HepG2 (cell line): ENCODE measurements at regions of chr3 and their contacts with region 1.

Region 1: GRCh38 chr3:33787328-33788009 is 11.0 kb upstream of the PDCD6IP start:
- DNase-seq: peak; percentile 65
- ATAC-seq: peak; percentile 95
- H3K4me3 ChIP-seq: peak overlapping the region; percentile 61 to 73 (median 61)
- H3K27ac ChIP-seq: no peak overlapping the region
- H3K4me1 ChIP-seq: peaks cover 18% of the 10 kb centered on the region
- H3K27me3 ChIP-seq: no peaks in the 10 kb centered on the region
- CTCF ChIP-seq: peak; percentile 89
- EP300 ChIP-seq: no peak
- POLR2A ChIP-seq: no peak
- RAD21 ChIP-seq: peak; percentile 64

Region 2: GRCh38 chr3:33474895-33475294 is 312.6 kb before region 1 on chr3:
- CTCF ChIA-PET with region 1: no interaction called
- POLR2A ChIA-PET with region 1: no interaction called
- in situ Hi-C with region 1: no loop called
- intact Hi-C with region 1: loop called (anchors 5 kb)
- DNase-seq: peak; percentile 30
- ATAC-seq: peak; percentile 53; the same call in 1 of the 3 replicates
- H3K4me3 ChIP-seq: no peak overlapping the region
- H3K27ac ChIP-seq: no peak overlapping the region
- H3K4me1 ChIP-seq: no peaks in the 10 kb centered on the region
- H3K27me3 ChIP-seq: no peaks in the 10 kb centered on the region
- CTCF ChIP-seq: no peak
- EP300 ChIP-seq: no peak
- POLR2A ChIP-seq: no peak
- RAD21 ChIP-seq: no peak

Region 3: DNA sequence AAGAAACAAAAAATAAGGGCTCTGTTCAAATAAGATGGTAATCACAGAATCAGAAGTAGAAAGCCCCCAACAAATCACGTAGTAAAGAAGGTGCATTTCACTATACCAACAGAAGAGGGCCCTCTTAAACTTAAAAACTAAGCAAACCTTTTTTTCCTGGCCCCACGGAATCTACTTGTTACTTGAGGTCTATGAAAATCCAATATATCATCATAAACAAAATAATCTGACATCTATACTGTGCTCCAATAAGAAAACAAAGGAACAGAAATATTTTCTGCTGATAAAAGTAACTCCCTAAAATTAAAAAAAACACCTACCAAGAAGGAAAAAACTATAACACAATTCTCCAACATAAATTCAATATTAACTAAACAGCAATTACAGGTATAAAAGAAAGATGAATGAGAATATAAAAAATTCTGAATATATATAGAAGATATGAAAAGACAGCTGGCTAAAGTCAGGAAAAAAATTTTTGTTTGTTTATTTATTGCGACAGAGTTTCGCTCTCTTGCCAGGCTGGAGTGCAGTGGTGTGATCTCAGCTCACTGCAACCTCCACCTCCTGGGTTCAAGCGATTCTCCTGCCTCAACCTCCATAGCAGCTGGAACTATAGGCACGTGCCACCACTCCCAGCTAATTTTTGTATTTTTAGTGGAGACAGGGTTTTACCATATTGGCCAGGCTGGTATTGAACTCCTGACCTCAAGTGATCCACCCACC is 151.2 kb before region 1 on chr3:
- CTCF ChIA-PET with region 1: interaction called, 18 read pairs
- POLR2A ChIA-PET with region 1: interaction called, 4 read pairs
- in situ Hi-C with region 1: loop called (anchors 5 kb)
- intact Hi-C with region 1: loop called (anchors 1 kb)
- DNase-seq: peak; percentile 56
- ATAC-seq: peak; percentile 38; the same call in 1 of the 3 replicates
- H3K4me3 ChIP-seq: no peak overlapping the region
- H3K27ac ChIP-seq: no peak overlapping the region
- H3K4me1 ChIP-seq: peaks cover 19% of the 10 kb centered on the region
- H3K27me3 ChIP-seq: no peaks in the 10 kb centered on the region
- CTCF ChIP-seq: peak; percentile 62
- EP300 ChIP-seq: no peak
- POLR2A ChIP-seq: no peak
- RAD21 ChIP-seq: peak; percentile 58

Region 4: DNA sequence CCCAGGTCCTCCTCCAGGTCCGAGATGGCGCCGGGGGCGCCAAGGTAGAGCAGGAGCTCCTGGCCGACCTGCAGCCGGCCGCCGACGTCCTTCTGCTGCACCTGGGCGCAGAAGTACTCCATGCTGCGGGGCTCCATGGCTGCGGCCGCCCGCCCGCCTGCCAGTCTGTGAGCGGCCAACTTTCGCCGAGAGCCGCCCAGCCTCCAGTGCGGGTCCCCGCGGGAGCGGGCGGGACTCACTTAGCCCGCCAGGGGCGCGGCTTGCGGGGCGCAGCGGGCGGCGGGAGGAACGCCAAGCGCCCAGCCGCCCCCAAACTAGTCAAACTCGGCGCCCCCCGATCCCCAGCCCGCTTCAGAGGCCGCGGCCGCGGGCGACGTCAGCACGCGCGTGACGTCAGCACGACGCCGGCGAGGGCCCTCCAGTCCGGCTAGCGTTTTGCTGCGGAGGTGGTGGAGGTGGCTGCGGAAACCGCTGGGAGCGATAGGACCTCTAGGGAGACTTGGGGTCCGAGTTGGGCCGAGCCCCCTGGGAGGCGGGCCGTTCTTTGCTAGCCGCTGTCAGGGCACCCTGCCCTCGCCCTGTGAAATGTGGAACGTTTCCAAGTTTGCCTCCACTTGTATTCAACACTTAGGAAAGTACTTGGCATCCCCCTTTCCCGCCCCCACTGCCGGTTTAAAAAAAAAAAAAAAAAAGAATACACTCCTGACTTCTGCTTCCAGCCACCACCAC is 69.4 kb before region 1 on chr3 and contains the start of gene CLASP2:
- CTCF ChIA-PET with region 1: no interaction called
- POLR2A ChIA-PET with region 1: no interaction called
- in situ Hi-C with region 1: no loop called
- intact Hi-C with region 1: loop called (anchors 2 kb)
- DNase-seq: peak; percentile 76
- ATAC-seq: peak; percentile 95
- H3K4me3 ChIP-seq: peak within 1 kb of the TSS; percentile 87 to 92 (median 89)
- H3K27ac ChIP-seq: peak within 1 kb of the TSS; percentile 94
- H3K4me1 ChIP-seq: peaks cover 30% of the 10 kb centered on the region
- H3K27me3 ChIP-seq: no peaks in the 10 kb centered on the region; a peak in 1 of 5 replicates
- CTCF ChIP-seq: no peak
- EP300 ChIP-seq: no peak
- POLR2A ChIP-seq: peak; percentile 40 to 69; a peak in 2 of 4 replicates
- RAD21 ChIP-seq: no peak
- total RNA-seq, gene CLASP2: 30.6 and 34.8 TPM in 2 replicates

Region 5: GRCh38 chr3:33798411-33799201 is 11.1 kb after region 1 on chr3 and contains the start of gene PDCD6IP:
- CTCF ChIA-PET with region 1: no interaction called
- POLR2A ChIA-PET with region 1: interaction called, 18 read pairs
- in situ Hi-C with region 1: no loop called
- intact Hi-C with region 1: no loop called
- DNase-seq: peak; percentile 89
- ATAC-seq: peak; percentile 98
- H3K4me3 ChIP-seq: peak within 1 kb of the TSS; percentile 94 to 97 (median 94)
- H3K27ac ChIP-seq: peak within 1 kb of the TSS; percentile 93
- H3K4me1 ChIP-seq: peaks cover 48% of the 10 kb centered on the region
- H3K27me3 ChIP-seq: no peaks in the 10 kb centered on the region; a peak in 1 of 5 replicates
- CTCF ChIP-seq: peak; percentile 53
- EP300 ChIP-seq: no peak; a peak in 2 of 4 replicates
- POLR2A ChIP-seq: peak; percentile 96 to 97
- RAD21 ChIP-seq: peak; percentile 36; the same call in 1 of the 2 replicates
- total RNA-seq, gene PDCD6IP: 62.5 and 116 TPM in 2 replicates

Region 6: GRCh38 chr3:33826688-33827087 is 39.2 kb after region 1 on chr3:
- CTCF ChIA-PET with region 1: no interaction called
- POLR2A ChIA-PET with region 1: no interaction called
- in situ Hi-C with region 1: no loop called
- intact Hi-C with region 1: no loop called
- DNase-seq: no peak
- ATAC-seq: no peak
- H3K4me3 ChIP-seq: no peak overlapping the region
- H3K27ac ChIP-seq: no peak overlapping the region
- H3K4me1 ChIP-seq: no peaks in the 10 kb centered on the region
- H3K27me3 ChIP-seq: no peaks in the 10 kb centered on the region
- CTCF ChIP-seq: no peak
- EP300 ChIP-seq: no peak
- POLR2A ChIP-seq: no peak
- RAD21 ChIP-seq: no peak